Naive thymus-derived CD8-positive, alpha-beta T cell (primary cell): ENCODE measurements at regions of chr7 and their contacts with region 1.

Region 1: GRCh38 chr7:24572997-24573625 is at the start of gene PALS2:
- DNase-seq: peak; percentile 79 to 92 (median 86)
- ATAC-seq: peak; percentile 78
- H3K4me3 Mint-ChIP-seq: peak within 1 kb of the TSS; percentile 88 to 98 (median 94)
- H3K27ac Mint-ChIP-seq: peak within 1 kb of the TSS; percentile 86 to 96 (median 94)
- H3K4me1 Mint-ChIP-seq: peaks cover 20 to 45% (median 41%) of the 10 kb centered on the region in 4 donors
- H3K27me3 Mint-ChIP-seq: peaks cover 0 to 9% (median 2%) of the 10 kb centered on the region in 5 donors
- polyA plus RNA-seq, gene PALS2: 23.4 to 29.9 (median 24.7) TPM

Region 2: DNA sequence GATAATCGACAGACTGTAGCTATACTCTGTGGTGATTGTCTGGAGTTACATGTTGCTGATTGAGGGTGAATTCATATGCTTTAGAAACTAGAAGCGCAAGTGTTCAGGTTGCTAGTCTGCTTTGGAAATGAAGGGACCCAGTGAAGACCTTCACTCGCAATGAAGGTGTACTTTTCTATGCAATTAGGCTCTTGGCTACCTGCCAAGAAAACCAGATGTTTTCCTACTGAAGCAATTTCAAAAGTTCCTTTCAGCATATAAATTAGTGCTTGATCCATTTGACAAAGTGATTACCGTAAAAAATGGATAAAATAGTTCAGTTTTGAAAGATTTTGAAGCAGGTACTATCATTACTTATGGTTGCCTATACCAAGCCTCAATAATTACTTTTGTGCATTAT is 873.1 kb before region 1 on chr7:
- POLR2A ChIA-PET with region 1: interaction called, 10 read pairs
- DNase-seq: no peak
- ATAC-seq: no peak
- H3K4me3 Mint-ChIP-seq: no peak overlapping the region
- H3K27ac Mint-ChIP-seq: no peak overlapping the region
- H3K4me1 Mint-ChIP-seq: peaks cover 0 to 9% (median under 1%) of the 10 kb centered on the region in 4 donors
- H3K27me3 Mint-ChIP-seq: no peaks in the 10 kb centered on the region

Region 3: DNA sequence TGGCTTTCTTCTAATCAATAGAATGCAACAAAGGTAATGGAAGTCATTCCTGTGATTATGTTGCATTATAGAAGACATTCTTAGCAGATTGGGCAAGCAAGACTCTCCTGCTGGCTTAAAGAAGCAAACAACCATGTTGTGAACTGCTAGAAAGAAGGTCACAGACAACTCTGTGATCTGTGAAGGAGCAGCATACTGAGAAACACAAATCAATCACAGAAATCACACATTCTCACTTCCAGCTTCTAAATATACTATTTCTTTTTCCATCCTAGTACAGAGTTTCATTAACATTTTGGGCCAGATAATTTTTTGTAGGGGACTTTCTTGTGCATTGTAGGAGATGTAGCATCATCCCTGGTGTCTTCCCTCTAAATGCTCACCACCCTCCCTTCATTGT is 27.9 kb before region 1 on chr7:
- POLR2A ChIA-PET with region 1: no interaction called
- DNase-seq: no peak
- ATAC-seq: no peak
- H3K4me3 Mint-ChIP-seq: no peak overlapping the region
- H3K27ac Mint-ChIP-seq: no peak overlapping the region
- H3K4me1 Mint-ChIP-seq: no peaks in the 10 kb centered on the region
- H3K27me3 Mint-ChIP-seq: peaks cover 4 to 19% (median 12%) of the 10 kb centered on the region in 5 donors

Region 4: GRCh38 chr7:24595671-24596418 is 22.7 kb after region 1 on chr7:
- POLR2A ChIA-PET with region 1: no interaction called
- DNase-seq: peak in 1 of 10 donors; percentile 18
- ATAC-seq: peak; percentile 57 to 67
- H3K4me3 Mint-ChIP-seq: no peak overlapping the region
- H3K27ac Mint-ChIP-seq: no peak overlapping the region
- H3K4me1 Mint-ChIP-seq: peaks cover 4 to 20% (median 6%) of the 10 kb centered on the region in 4 donors
- H3K27me3 Mint-ChIP-seq: no peaks in the 10 kb centered on the region